ENCODE measurements at regions of chr1 and their contacts with region 1.

Region 1: DNA sequence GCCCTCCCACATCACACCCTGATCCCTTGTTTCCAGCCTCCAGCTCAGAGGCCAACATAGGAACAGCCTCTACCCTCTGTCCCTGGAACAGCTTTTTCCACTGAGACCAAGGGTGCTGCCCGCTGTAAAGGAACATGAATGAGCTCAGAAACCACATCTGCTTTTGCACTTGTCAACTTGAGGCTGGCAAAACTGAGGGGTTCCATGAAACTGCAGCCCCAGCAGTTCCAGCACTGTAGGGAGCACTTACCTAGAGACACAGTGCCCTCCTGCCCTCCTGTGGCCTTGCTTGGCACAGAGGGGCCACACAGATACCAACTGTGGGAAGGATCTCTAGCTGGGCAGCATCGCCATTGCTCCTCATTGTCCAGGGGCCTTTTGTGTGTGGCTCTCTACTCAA is 51.7 kb downstream of the ITPKB start:
- DNase-seq: peak; percentile 43 to 71 (median 52)
- H3K4me3 ChIP-seq: no peak overlapping the region
- H3K4me3 Mint-ChIP-seq: peak overlapping the region in 7 of 8 donors; percentile 21 to 70 (median 37)
- H3K27ac ChIP-seq: peak overlapping the region; percentile 89
- H3K27ac Mint-ChIP-seq: peak overlapping the region; percentile 94 to 99 (median 99)
- H3K4me1 ChIP-seq: peaks cover 100% of the 10 kb centered on the region
- H3K4me1 Mint-ChIP-seq: peaks cover 92 to 100% (median 97%) of the 10 kb centered on the region in 4 donors
- H3K27me3 ChIP-seq: no peaks in the 10 kb centered on the region
- H3K27me3 Mint-ChIP-seq: no peaks in the 10 kb centered on the region

Region 2: GRCh38 chr1:226634166-226634588 is 53.2 kb before region 1 on chr1:
- CTCF ChIA-PET with region 1: interaction called, 80 read pairs
- POLR2A ChIA-PET with region 1: interaction called, 3 read pairs
- intact Hi-C with region 1: loop called (anchors 1 kb)
- DNase-seq: peak; percentile 74 to 81 (median 78)
- H3K4me3 ChIP-seq: no peak overlapping the region
- H3K4me3 Mint-ChIP-seq: peak overlapping the region in 7 of 8 donors; percentile 1 to 82 (median 53)
- H3K27ac ChIP-seq: peak overlapping the region; percentile 56
- H3K27ac Mint-ChIP-seq: peak overlapping the region; percentile 72 to 94 (median 88)
- H3K4me1 ChIP-seq: peaks cover 53% of the 10 kb centered on the region
- H3K4me1 Mint-ChIP-seq: peaks cover 28 to 70% (median 53%) of the 10 kb centered on the region in 4 donors
- H3K27me3 ChIP-seq: no peaks in the 10 kb centered on the region
- H3K27me3 Mint-ChIP-seq: no peaks in the 10 kb centered on the region

Region 3: DNA sequence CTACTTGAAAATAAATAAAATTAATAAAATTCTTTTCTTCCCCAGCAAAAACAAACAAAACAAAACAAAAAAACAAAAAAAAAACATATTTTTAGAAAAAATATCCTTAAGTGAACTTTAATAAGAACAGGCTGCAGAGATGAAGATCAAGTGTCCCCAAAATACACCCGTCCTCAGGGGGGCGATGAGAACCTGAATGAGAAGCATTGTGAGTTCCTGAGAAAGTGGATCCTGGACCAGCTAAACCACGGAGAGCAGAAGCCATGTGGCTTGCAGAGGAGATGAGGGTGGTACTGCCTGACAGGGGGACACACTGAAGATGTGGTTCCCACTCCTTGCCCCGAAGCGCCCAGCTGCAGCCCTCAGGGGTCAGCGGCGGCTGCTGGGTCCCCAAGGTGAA is 37.6 kb before region 1 on chr1:
- CTCF ChIA-PET with region 1: interaction called, 14 read pairs
- POLR2A ChIA-PET with region 1: interaction called, 16 read pairs
- intact Hi-C with region 1: no loop called
- DNase-seq: peak in 3 of 5 donors; percentile 36 to 65 (median 42)
- H3K4me3 ChIP-seq: no peak overlapping the region
- H3K4me3 Mint-ChIP-seq: peak overlapping the region in 2 of 8 donors; percentile 32 to 45
- H3K27ac ChIP-seq: no peak overlapping the region
- H3K27ac Mint-ChIP-seq: peak overlapping the region in 5 of 7 donors; percentile 43 to 84 (median 66)
- H3K4me1 ChIP-seq: peaks cover 34% of the 10 kb centered on the region
- H3K4me1 Mint-ChIP-seq: peaks cover 28 to 61% (median 53%) of the 10 kb centered on the region in 4 donors
- H3K27me3 ChIP-seq: no peaks in the 10 kb centered on the region
- H3K27me3 Mint-ChIP-seq: no peaks in the 10 kb centered on the region

Region 4: DNA sequence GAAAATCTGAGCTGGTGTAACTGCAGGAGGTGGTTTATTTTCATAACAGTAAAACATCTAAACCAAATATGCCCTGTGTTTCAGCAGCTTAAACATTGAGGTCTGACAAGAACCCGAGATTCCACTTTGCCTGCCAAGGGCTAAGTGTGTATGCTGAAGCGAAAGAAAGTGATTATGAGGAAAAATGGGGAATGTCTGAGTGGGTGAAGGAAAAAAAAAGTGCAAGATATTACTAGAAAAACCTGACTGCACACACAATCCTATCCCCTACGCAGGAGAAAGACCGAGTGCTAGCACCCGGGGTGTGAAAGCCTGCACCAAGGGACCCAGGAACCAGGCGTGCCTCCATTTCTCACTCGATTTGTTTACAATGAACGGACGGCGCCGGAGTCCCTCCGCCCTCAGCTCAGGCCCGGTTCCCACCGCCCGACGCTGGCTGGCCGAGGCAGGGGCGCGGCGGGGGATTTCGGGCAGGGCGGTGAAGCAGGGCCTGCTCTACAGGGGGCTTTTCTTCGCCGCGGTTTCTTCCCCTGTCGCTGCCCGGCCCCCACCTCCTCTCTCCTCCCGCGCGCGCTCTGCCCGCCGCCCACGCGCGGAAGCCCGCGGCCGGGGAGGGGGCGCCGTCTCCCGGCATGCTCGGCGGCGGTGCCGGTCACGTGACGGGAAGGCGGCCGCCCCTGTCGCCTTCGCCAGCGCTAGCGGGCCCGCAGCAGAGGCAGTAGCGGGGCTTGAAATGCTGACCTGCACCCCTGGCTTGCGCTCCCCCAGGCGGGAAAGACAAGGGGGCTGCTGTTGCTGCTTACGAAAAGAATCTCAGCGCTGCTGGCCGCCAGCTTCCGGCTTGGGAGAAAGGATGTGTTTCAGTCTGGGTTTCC is 15.8 kb after region 1 on chr1:
- CTCF ChIA-PET with region 1: interaction called, 7 read pairs
- POLR2A ChIA-PET with region 1: interaction called, 11 read pairs
- intact Hi-C with region 1: loop called (anchors 1 kb)
- DNase-seq: peak; percentile 83 to 89 (median 86)
- H3K4me3 ChIP-seq: peak overlapping the region; percentile 21 to 68
- H3K4me3 Mint-ChIP-seq: peak overlapping the region; percentile 81 to 88 (median 85)
- H3K27ac ChIP-seq: peak overlapping the region; percentile 86
- H3K27ac Mint-ChIP-seq: peak overlapping the region; percentile 88 to 98 (median 96)
- H3K4me1 ChIP-seq: peaks cover 87% of the 10 kb centered on the region
- H3K4me1 Mint-ChIP-seq: peaks cover 59 to 92% (median 81%) of the 10 kb centered on the region in 4 donors
- H3K27me3 ChIP-seq: no peaks in the 10 kb centered on the region
- H3K27me3 Mint-ChIP-seq: no peaks in the 10 kb centered on the region

Measured in CD4-positive, alpha-beta memory T cell (primary cell).